ENCODE measurements at regions of chr1 and their contacts with region 1.

Region 1: DNA sequence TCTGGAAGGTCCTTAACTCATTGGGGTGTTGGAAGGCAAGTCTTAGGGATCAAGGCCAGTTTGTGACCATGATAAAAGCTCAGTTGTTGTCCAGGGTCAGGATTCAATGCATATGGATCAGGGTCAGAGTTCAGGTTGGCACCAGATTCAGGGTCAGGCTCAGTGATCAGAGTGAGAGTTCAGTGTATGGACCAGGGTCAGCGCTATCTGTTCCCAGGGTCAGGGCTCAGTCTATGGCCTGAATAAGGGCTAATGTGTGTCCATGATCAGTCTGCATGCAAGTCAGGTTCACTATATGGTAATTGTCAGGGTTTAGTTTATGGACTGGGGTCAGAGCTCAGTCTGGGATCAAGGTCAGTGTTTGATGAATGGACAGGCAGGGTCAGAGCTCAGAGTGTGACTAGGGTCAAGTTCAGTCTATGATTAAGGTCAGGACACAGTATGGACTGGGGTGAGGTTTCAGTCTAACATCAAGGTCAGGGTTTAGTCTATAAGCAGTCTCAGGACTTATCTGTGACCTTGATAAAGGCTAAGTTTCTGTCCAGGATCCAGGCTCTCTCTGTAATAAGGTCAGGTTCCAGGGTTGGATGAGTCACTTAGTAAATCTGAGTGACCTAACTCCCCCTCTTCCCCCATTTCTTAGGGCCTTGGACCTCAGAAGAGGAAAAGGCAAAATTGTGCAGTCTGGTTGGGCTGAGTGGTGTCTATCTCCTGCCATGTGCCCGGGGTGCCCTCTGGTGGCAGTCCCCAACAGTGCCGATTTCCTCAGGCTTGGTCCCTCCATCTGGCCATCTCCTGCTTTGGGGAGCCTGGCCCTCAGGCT is 23.8 kb downstream of the KNCN start:
- DNase-seq: peak; percentile 81
- H3K4me3 ChIP-seq: no peak overlapping the region
- H3K27ac ChIP-seq: no peak overlapping the region
- H3K4me1 ChIP-seq: peaks cover 2% of the 10 kb centered on the region
- H3K27me3 ChIP-seq: peaks cover 85% of the 10 kb centered on the region
- CTCF ChIP-seq: peak; percentile 94

Region 2: DNA sequence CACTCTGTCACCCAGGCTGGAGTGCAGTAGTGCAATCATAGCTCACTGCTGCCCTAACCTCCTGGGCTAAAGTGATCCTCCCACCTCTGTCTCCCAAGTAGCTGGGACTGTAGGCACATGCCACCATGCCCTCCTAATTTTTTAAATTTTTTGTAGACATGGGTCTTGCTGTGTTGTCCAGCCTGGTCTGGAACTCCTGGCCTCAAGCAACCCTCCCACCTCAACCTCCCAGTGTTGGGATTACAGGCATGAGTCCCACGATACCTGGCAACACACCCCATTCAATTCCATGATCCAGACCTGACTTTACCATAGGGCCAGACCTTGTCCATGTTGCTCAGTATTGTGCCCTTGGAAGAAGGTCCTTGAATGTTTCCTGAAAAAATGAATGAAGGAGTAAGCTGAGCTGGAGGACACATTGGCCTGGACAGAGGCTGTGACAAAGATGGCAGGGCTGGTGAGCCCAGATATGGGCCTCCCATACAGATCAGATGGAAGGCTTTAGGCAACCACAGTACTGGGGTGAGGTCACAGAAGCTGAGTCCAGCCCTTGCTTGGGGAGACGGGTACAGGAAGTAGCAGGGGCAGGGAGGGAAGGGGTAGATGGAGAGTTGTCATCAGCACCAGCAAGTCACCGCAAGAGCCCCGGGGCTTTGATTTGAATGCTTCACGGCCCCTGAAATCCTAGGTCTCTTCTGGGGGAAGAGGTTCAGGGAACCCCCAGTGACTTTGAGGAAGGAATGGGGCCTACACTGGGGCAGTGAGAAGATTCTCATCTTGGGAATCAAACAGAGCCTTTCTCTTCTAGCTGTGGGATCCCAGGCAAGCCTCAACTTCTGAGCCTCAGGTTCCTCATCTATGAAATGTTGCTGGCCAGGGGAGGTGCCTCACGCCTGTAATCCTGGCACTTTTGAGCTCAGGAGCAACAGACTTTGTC is 78.2 kb before region 1 on chr1:
- intact Hi-C with region 1: loop called (anchors 5 kb)
- DNase-seq: no peak
- H3K4me3 ChIP-seq: no peak overlapping the region
- H3K27ac ChIP-seq: no peak overlapping the region
- H3K4me1 ChIP-seq: peaks cover 13% of the 10 kb centered on the region
- H3K27me3 ChIP-seq: peaks cover 94% of the 10 kb centered on the region
- CTCF ChIP-seq: no peak

Region 3: GRCh38 chr1:46724991-46725735 is 197.5 kb after region 1 on chr1:
- intact Hi-C with region 1: loop called (anchors 10 kb)
- DNase-seq: peak; percentile 48
- H3K4me3 ChIP-seq: no peak overlapping the region
- H3K27ac ChIP-seq: peak overlapping the region; percentile 51
- H3K4me1 ChIP-seq: peaks cover 19% of the 10 kb centered on the region
- H3K27me3 ChIP-seq: peaks cover 29% of the 10 kb centered on the region
- CTCF ChIP-seq: peak; percentile 89

Measured in left ventricle myocardium inferior (tissue), 1 donor.